ENCODE measurements at regions of chr16 and their contacts with region 1.

Region 1: DNA sequence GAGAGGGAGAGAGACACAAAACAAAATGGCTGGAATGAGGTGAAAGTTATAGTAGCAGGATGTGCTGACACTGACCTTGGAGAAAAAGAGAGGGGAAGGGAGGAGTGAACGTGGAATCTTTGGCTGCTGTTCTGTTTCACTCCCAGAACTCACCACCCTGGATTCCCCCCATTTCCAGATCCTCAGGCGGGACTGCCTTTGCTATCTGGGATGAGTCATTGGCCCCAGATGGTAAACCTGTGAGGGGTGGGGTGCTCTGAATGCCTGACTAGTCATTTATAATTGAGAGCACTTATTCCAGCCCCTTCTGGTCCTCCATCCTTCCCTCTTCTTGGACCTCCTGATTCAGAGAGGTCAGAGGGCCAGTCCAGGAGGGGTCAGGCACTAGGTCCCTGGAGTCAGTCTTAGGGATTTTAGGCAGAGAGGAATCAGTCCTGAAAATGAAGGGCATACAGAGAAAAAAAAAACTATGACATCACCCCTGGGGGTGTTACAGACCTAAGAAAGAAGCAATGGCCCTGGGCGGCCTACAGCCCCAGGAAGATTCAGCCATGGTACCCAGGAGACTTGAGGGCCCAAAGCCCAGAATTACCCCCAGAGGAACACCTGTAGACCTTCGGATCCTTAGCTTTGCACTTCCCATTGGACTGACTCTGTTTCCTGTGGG is 2.2 kb upstream of the ZG16 start:
- DNase-seq: no peak
- H3K4me3 ChIP-seq: no peak overlapping the region
- H3K27ac ChIP-seq: no peak overlapping the region
- H3K4me1 ChIP-seq: no peaks in the 10 kb centered on the region
- H3K27me3 ChIP-seq: no peaks in the 10 kb centered on the region
- CTCF ChIP-seq: no peak
- POLR2A ChIP-seq: no peak

Region 2: DNA sequence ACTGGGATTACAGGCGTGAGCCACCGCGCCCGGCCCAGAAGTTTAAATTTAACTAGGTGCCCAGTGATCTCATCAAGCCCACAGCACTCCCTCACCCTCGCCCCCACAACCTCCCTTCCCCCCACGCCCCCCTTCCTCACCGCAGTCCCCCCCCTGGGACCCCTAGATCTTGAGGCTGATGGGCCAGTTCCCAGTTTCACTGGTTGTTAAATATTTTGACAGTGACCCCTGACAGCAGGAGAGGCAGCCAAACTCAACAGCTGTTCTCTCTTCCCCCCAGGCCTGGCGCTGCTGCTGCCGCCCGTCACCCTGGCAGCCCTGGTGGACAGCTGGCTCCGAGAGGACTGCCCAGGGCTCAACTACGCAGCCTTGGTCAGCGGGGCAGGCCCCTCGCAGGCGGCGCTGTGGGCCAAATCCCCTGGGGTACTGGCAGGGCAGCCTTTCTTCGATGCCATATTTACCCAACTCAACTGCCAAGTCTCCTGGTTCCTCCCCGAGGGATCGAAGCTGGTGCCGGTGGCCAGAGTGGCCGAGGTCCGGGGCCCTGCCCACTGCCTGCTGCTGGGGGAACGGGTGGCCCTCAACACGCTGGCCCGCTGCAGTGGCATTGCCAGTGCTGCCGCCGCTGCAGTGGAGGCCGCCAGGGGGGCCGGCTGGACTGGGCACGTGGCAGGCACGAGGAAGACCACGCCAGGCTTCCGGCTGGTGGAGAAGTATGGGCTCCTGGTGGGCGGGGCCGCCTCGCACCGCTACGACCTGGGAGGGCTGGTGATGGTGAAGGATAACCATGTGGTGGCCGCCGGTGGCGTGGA is 81.3 kb before region 1 on chr16:
- intact Hi-C with region 1: loop called in 1 of 2 experiments (anchors 10 kb)
- DNase-seq: no peak
- H3K4me3 ChIP-seq: no peak overlapping the region
- H3K27ac ChIP-seq: no peak overlapping the region
- H3K4me1 ChIP-seq: no peaks in the 10 kb centered on the region
- H3K27me3 ChIP-seq: no peaks in the 10 kb centered on the region
- CTCF ChIP-seq: no peak
- POLR2A ChIP-seq: no peak

Region 3: DNA sequence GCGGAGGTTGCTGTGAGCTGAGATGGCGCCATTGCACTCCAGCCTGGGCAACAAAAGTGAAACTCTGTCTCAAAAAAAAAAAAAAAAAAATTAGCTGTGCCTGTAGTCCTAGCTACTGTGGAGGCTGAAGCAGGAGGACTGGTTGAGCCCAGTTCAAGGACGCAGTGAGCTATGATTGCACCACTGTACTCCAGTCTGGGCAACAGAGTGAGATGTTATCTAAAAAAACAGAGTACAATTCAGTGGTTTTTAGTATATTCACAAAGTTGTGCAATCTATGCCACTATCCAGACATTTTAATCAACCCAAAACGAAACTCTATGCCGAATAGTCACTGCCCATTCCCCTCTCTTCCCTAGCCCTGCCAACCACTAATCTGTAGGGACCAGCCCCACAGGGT is 55.2 kb before region 1 on chr16:
- intact Hi-C with region 1: no loop called
- DNase-seq: peak in 1 of 7 donors; percentile 16
- H3K4me3 ChIP-seq: no peak overlapping the region
- H3K27ac ChIP-seq: no peak overlapping the region
- H3K4me1 ChIP-seq: no peaks in the 10 kb centered on the region
- H3K27me3 ChIP-seq: no peaks in the 10 kb centered on the region
- CTCF ChIP-seq: no peak
- POLR2A ChIP-seq: no peak

Measured in adrenal gland (tissue), 19 donors.